Endothelial cell of umbilical vein (primary cell): ENCODE measurements at regions of chr19 and their contacts with region 1.

Region 1: GRCh38 chr19:11694533-11695439 is 44.0 kb downstream of the ZNF823 start:
- DNase-seq: peak; percentile 93
- H3K4me3 ChIP-seq: peak overlapping the region; percentile 66 to 93 (median 76)
- H3K27ac ChIP-seq: peak overlapping the region; percentile 7
- H3K4me1 ChIP-seq: peaks cover 2% of the 10 kb centered on the region
- H3K27me3 ChIP-seq: no peaks in the 10 kb centered on the region
- CTCF ChIP-seq: no peak
- POLR2A ChIP-seq: no peak

Region 2: GRCh38 chr19:11766597-11767591 is 72.1 kb after region 1 on chr19 and contains the start of gene ZNF441:
- CTCF ChIA-PET with region 1: interaction called, 13 read pairs
- POLR2A ChIA-PET with region 1: no interaction called
- dilution Hi-C with region 1: no loop called
- intact Hi-C with region 1: loop called (anchors 2 kb)
- DNase-seq: peak; percentile 95
- H3K4me3 ChIP-seq: peak within 1 kb of the TSS; percentile 46 to 88 (median 71)
- H3K27ac ChIP-seq: peak within 1 kb of the TSS; percentile 65
- H3K4me1 ChIP-seq: peaks cover 6% of the 10 kb centered on the region
- H3K27me3 ChIP-seq: no peaks in the 10 kb centered on the region
- CTCF ChIP-seq: no peak
- POLR2A ChIP-seq: peak; percentile 69
- total RNA-seq, gene ZNF441: 2.4 and 4.5 TPM in 2 replicates